ENCODE measurements at regions of chr20 and their contacts with region 1.

Region 1: GRCh38 chr20:62972270-62973032 is 19.9 kb downstream of the SLC17A9 start:
- DNase-seq: peak; percentile 64 to 86
- H3K4me3 ChIP-seq: no peak overlapping the region; the same call in 1 of the 2 replicates
- H3K27ac ChIP-seq: no peak overlapping the region
- H3K4me1 ChIP-seq: 0 out of 2 replicates have a peak, but pooled peaks cover 3% of the 10 kb centered on the region
- H3K27me3 ChIP-seq: peaks cover 95% of the 10 kb centered on the region
- CTCF ChIP-seq: peak; percentile 88

Region 2: GRCh38 chr20:62584671-62585460 is 387.6 kb before region 1 on chr20:
- CTCF ChIA-PET with region 1: interaction called, 10 read pairs
- POLR2A ChIA-PET with region 1: no interaction called
- intact Hi-C with region 1: no loop called
- DNase-seq: no peak
- H3K4me3 ChIP-seq: no peak overlapping the region
- H3K27ac ChIP-seq: no peak overlapping the region
- H3K4me1 ChIP-seq: no peaks in the 10 kb centered on the region; the same call in 1 of the 2 replicates
- H3K27me3 ChIP-seq: peaks cover 72% of the 10 kb centered on the region
- CTCF ChIP-seq: no peak

Region 3: GRCh38 chr20:63009045-63009961 is 36.9 kb after region 1 on chr20:
- CTCF ChIA-PET with region 1: interaction called, 11 read pairs
- POLR2A ChIA-PET with region 1: no interaction called
- intact Hi-C with region 1: loop called (anchors 1 kb)
- DNase-seq: peak; percentile 60 to 79
- H3K4me3 ChIP-seq: no peak overlapping the region
- H3K27ac ChIP-seq: no peak overlapping the region
- H3K4me1 ChIP-seq: no peaks in the 10 kb centered on the region
- H3K27me3 ChIP-seq: peaks cover 49% of the 10 kb centered on the region
- CTCF ChIP-seq: peak; percentile 95

Region 4: GRCh38 chr20:63071541-63072181 is 99.2 kb after region 1 on chr20:
- CTCF ChIA-PET with region 1: interaction called, 11 read pairs
- POLR2A ChIA-PET with region 1: no interaction called
- intact Hi-C with region 1: no loop called
- DNase-seq: no peak
- H3K4me3 ChIP-seq: no peak overlapping the region
- H3K27ac ChIP-seq: no peak overlapping the region
- H3K4me1 ChIP-seq: no peaks in the 10 kb centered on the region
- H3K27me3 ChIP-seq: peaks cover 83% of the 10 kb centered on the region
- CTCF ChIP-seq: no peak

Region 5: DNA sequence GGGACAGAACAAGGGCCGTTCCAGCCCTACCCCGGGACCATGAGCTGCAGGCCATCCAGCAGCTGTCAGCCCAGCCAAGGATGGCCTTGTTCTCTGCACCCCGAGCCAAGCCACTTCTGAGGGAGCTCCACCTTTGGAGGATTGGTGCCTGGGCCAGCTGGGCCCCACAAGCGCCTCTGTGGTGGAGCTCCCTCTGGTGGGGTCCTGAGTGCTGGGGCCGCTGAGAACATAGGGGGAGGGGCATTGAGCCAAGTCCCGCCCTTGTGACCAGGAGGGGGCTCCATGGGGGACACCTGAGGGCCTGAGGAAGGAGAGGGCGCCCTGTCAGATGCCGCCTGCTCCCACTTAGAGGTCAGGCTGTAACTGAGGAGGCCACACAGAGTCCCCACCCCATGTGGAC is 200.3 kb after region 1 on chr20:
- CTCF ChIA-PET with region 1: no interaction called
- POLR2A ChIA-PET with region 1: no interaction called
- intact Hi-C with region 1: loop called (anchors 2 kb)
- DNase-seq: peak in 1 of 2 experiments; percentile 20
- H3K4me3 ChIP-seq: no peak overlapping the region
- H3K27ac ChIP-seq: no peak overlapping the region
- H3K4me1 ChIP-seq: no peaks in the 10 kb centered on the region
- H3K27me3 ChIP-seq: peaks cover 70% of the 10 kb centered on the region
- CTCF ChIP-seq: peak; percentile 33; the same call in 1 of the 2 replicates

Measured in PC-9 (cell line).